SK-N-SH (cell line): ENCODE measurements at regions of chr3 and their contacts with region 1.

Region 1: GRCh38 chr3:64224826-64225610 is at the start of gene PRICKLE2:
- DNase-seq: no peak
- H3K4me3 ChIP-seq: peak within 1 kb of the TSS; percentile 35 to 37
- H3K27ac ChIP-seq: peak within 1 kb of the TSS; percentile 47 to 61
- H3K4me1 ChIP-seq: peaks cover 16 to 23% of the 10 kb centered on the region in 2 experiments; a peak in 3 of 4 replicates
- H3K27me3 ChIP-seq: no peaks in the 10 kb centered on the region
- CTCF ChIP-seq: peak; percentile 33
- EP300 ChIP-seq: no peak
- RAD21 ChIP-seq: no peak
- polyA plus RNA-seq, gene PRICKLE2: 0.67 and 1.1 TPM in 2 replicates

Region 2: GRCh38 chr3:64199932-64200331 is 25.1 kb before region 1 on chr3:
- CTCF ChIA-PET with region 1: no interaction called
- POLR2A ChIA-PET with region 1: no interaction called
- DNase-seq: no peak
- H3K4me3 ChIP-seq: no peak overlapping the region
- H3K27ac ChIP-seq: no peak overlapping the region
- H3K4me1 ChIP-seq: no peaks in the 10 kb centered on the region; a peak in 1 of 4 replicates
- H3K27me3 ChIP-seq: no peaks in the 10 kb centered on the region
- CTCF ChIP-seq: no peak
- EP300 ChIP-seq: no peak
- RAD21 ChIP-seq: no peak

Region 3: DNA sequence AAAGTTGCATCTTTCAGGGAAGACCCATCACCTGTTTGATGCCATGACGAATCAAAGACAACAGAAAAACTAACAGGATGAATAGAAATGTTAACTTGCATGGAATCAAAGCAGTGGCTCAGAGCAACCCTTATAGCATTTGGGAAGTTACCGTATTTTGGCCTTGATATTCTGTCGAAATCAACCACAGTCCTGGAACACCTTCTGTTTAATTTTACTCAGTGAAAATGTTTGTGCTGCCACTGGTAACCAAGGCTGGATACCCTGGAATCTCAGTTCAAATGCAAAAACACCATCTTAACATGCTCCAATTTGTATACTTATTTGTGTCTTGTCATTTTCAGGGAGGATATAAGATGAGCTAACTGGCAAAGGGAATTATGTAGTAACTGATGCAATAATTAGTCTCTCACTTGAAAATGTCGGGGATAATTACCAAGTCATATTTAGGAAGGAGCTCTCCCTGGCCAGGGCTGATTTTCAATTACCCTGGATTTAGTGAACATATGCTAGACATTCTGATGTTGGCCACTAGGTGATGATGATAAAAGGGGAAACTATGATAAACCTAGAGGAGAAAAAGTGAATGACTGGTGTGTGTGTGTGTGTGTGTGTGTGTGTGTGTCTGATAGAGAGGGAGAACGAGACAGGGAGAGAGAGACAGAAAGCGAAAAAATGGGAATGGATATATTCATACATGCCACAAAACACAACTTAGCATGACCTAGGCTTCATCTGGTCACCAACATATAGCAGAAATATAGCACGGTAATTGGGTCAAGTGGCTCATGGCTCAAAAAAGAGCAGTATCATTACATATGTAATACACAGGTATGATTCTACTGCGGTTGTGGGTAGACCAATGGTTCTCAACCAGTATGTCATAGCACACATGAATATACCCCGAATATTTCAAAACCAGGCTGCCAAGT is 19.3 kb after region 1 on chr3:
- CTCF ChIA-PET with region 1: interaction called, 12 read pairs
- POLR2A ChIA-PET with region 1: no interaction called
- DNase-seq: no peak
- H3K4me3 ChIP-seq: no peak overlapping the region
- H3K27ac ChIP-seq: no peak overlapping the region
- H3K4me1 ChIP-seq: peaks cover 1 to 3% of the 10 kb centered on the region in 2 experiments; a peak in 1 of 4 replicates
- H3K27me3 ChIP-seq: no peaks in the 10 kb centered on the region
- CTCF ChIP-seq: peak; percentile 59
- EP300 ChIP-seq: no peak
- RAD21 ChIP-seq: no peak

Region 4: GRCh38 chr3:64270142-64270865 is 45.3 kb after region 1 on chr3:
- CTCF ChIA-PET with region 1: no interaction called
- POLR2A ChIA-PET with region 1: no interaction called
- DNase-seq: no peak
- H3K4me3 ChIP-seq: no peak overlapping the region
- H3K27ac ChIP-seq: no peak overlapping the region
- H3K4me1 ChIP-seq: peaks cover 5 to 15% of the 10 kb centered on the region in 2 experiments
- H3K27me3 ChIP-seq: no peaks in the 10 kb centered on the region
- CTCF ChIP-seq: no peak
- EP300 ChIP-seq: no peak
- RAD21 ChIP-seq: no peak